Activated CD4-positive, alpha-beta T cell treated with anti-CD3 and anti-CD28 coated beads, Interleukin-2, amount 10 ng/mL, durations not matched to agents 24 days and 14 days (primary cell): ENCODE measurements at regions of chr14 and their contacts with region 1.

Region 1: GRCh38 chr14:77554207-77554606 is 55.6 kb upstream of the ISM2 start:
- DNase-seq: peak; percentile 72
- H3K4me3 Mint-ChIP-seq: peak overlapping the region; percentile 70
- H3K27ac Mint-ChIP-seq: peak overlapping the region; percentile 84
- H3K4me1 Mint-ChIP-seq: peaks cover 19% of the 10 kb centered on the region
- H3K27me3 Mint-ChIP-seq: no peaks in the 10 kb centered on the region

Region 2: GRCh38 chr14:77151918-77152588 is 402.2 kb before region 1 on chr14:
- intact Hi-C with region 1: loop called (anchors 5 kb)
- DNase-seq: no peak
- H3K4me3 Mint-ChIP-seq: no peak overlapping the region
- H3K27ac Mint-ChIP-seq: no peak overlapping the region
- H3K4me1 Mint-ChIP-seq: no peaks in the 10 kb centered on the region
- H3K27me3 Mint-ChIP-seq: peaks cover 32% of the 10 kb centered on the region

Region 3: GRCh38 chr14:77301103-77301502 is 253.1 kb before region 1 on chr14:
- intact Hi-C with region 1: loop called (anchors 2 kb)
- DNase-seq: peak; percentile 88
- H3K4me3 Mint-ChIP-seq: no peak overlapping the region
- H3K27ac Mint-ChIP-seq: no peak overlapping the region
- H3K4me1 Mint-ChIP-seq: peaks cover 22% of the 10 kb centered on the region
- H3K27me3 Mint-ChIP-seq: no peaks in the 10 kb centered on the region

Region 4: GRCh38 chr14:77376771-77377501 is 177.3 kb before region 1 on chr14 and contains the starts of genes SAMD15 and TMED8:
- intact Hi-C with region 1: loop called (anchors 10 kb)
- DNase-seq: peak; percentile 95
- H3K4me3 Mint-ChIP-seq: peak within 1 kb of the TSS; percentile 93
- H3K27ac Mint-ChIP-seq: peak within 1 kb of the TSS; percentile 92
- H3K4me1 Mint-ChIP-seq: peaks cover 29% of the 10 kb centered on the region
- H3K27me3 Mint-ChIP-seq: peaks cover 16% of the 10 kb centered on the region
- total RNA-seq, gene SAMD15: 0.28 and 0.63 TPM in 2 replicates
- total RNA-seq, gene TMED8: 31.1 and 32.1 TPM in 2 replicates